HEK293 (cell line): ENCODE measurements at regions of chr22 and their contacts with region 1.

Region 1: DNA sequence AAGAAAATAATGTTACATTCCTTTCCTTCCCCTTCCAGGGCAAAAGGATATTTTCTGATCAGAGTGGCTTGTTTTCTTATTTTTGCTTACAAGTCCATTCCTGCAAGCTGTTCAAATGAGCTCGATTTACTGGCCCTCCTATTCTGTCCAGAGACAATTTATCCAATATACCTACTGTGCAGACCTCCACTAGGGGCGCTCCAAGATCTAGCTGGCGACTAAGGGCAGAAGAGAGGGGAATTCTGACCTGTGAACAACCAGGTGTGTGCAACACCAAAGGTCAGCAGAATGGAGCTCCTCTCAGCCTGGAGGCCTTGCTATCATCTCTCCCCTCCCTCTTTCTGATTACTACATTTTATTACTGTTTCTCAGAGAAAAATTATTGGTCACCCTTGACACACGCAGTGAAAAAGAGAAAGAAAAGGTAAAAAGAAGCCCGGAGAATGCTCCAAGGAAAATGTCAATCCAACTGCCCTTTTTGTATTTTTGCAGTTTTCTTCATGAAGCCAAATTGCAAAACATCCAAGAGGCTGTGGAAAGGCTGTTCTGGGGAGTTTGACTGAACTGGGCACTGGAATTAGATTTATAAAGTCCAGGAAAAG is 3.2 kb downstream of the SEZ6L start:
- H3K4me3 ChIP-seq: no peak overlapping the region
- H3K27ac ChIP-seq: no peak overlapping the region
- H3K4me1 ChIP-seq: 0 out of 2 replicates have a peak, but pooled peaks cover 3% of the 10 kb centered on the region
- CTCF ChIP-seq: no peak

Region 2: GRCh38 chr22:26182723-26183122 is 10.2 kb after region 1 on chr22:
- CTCF ChIA-PET with region 1: interaction called, 22 read pairs
- POLR2A ChIA-PET with region 1: no interaction called
- H3K4me3 ChIP-seq: no peak overlapping the region
- H3K27ac ChIP-seq: no peak overlapping the region
- H3K4me1 ChIP-seq: no peaks in the 10 kb centered on the region
- CTCF ChIP-seq: no peak

Region 3: DNA sequence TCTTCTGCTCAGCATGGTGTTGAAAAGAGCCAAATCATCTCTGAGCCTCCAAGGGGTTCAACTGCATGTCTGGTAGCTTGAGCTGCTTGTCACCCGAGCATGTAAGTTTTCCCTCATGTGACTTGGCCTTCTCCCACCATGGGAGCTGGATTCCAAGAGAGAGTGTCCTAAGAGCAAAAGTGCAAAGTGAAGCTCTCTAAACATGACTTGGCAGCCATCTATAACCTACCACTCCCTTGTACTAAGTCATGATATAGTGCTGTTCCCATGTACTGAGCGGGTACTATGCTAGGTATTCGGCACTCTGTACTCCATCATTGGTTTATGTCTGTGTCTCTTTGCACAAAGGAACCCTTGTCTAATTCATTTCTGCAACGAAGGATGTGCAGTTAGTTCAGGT is 15.9 kb after region 1 on chr22:
- CTCF ChIA-PET with region 1: interaction called, 22 read pairs
- POLR2A ChIA-PET with region 1: no interaction called
- H3K4me3 ChIP-seq: no peak overlapping the region
- H3K27ac ChIP-seq: no peak overlapping the region
- H3K4me1 ChIP-seq: no peaks in the 10 kb centered on the region
- CTCF ChIP-seq: no peak

Region 4: GRCh38 chr22:26202280-26202924 is 29.9 kb after region 1 on chr22:
- CTCF ChIA-PET with region 1: interaction called, 10 read pairs
- POLR2A ChIA-PET with region 1: no interaction called
- H3K4me3 ChIP-seq: no peak overlapping the region
- H3K27ac ChIP-seq: no peak overlapping the region
- H3K4me1 ChIP-seq: no peaks in the 10 kb centered on the region
- CTCF ChIP-seq: no peak